ENCODE measurements at regions of chr9 and their contacts with region 1.

Region 1: GRCh38 chr9:136244122-136244968 is 1.3 kb downstream of the QSOX2 start:
- DNase-seq: peak; percentile 23
- H3K4me3 ChIP-seq: peak overlapping the region; percentile 68
- CTCF ChIP-seq: no peak

Region 2: GRCh38 chr9:136157477-136158265 is 86.7 kb before region 1 on chr9:
- in situ Hi-C with region 1: loop called (anchors 5 kb)
- DNase-seq: no peak
- H3K4me3 ChIP-seq: no peak overlapping the region
- CTCF ChIP-seq: no peak

Region 3: DNA sequence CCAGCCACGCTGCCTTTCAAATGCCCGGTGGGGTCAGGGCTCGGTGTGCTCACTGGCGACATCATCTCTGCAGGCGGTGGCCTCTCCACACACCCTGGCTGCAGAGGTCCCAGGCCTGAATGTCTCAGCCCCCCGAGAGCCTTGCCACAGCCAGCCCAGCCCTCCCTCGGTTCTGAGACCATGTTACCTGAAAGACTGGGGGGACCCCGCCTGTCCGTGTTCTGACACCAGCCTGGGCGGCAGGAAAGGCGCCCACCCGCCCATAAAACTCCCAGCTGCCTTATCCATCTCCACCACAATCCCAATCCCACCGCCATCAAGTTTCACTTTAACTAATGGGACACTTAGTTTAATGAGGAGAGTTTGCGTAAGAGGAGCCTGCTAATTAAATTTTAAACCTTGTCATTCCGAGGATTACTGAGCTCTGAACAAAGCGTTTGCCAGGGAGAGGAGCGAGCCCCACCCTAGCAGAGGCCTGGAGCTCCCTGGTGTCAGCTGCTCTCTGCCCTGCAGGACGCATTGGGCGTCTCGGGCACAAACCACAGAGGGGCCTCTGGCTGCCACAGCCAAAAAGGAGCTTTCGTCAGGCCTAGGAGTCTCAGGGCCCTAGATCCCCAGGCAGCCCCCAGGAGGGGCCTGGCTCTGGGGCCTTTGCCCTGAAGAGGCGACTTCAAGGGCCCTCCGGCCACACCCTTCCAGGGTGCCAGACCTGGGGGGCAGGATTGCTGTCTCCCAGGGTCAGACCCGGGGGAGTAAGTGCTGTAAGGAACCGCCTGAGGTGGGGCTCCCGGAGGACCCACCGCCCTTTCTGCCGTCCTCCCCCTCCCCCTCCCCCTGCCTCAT is 54.7 kb before region 1 on chr9:
- in situ Hi-C with region 1: loop called (anchors 5 kb)
- DNase-seq: no peak
- H3K4me3 ChIP-seq: no peak overlapping the region
- CTCF ChIP-seq: no peak